Common myeloid progenitor, CD34-positive (primary cell): ENCODE measurements at regions of chr18 and their contacts with region 1.

Region 1: DNA sequence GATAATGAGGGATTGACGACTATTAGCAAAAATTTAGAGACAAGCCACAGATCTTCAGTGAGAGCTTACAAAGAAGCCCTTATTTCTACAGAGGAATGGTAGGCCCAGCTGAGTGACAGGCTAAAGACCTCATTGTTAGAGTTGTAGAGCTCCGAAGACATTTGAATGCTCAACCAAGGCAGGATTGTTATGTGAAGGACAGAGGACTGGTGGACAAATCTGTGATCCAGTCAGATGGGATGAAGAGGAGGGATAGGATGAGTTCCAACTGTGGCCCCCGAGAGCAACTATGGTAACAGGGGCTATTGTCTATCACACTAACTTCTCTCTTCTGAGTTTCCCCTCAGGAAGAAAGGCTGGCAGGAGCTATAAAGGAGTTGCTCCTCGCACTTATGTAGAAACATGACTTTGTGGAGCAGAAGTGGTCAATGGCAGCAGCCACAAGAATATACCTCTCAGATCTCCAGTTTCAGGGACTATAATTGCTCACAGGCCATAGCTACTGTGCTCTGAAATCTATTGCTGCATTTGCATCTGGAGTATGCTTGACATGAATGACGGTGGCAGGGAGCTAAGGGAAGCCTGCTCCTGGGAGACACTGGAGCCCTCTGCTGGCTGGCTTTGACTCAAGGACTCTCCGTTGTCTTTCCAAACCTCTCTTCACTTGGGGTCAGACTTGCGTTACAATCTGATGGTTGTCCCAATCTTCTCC is 50.3 kb upstream of the GREB1L start:
- DNase-seq: peak; percentile 25 to 53 (median 42)
- H3K4me3 ChIP-seq: no peak overlapping the region
- H3K27ac ChIP-seq: no peak overlapping the region
- H3K4me1 ChIP-seq: no peaks in the 10 kb centered on the region
- H3K27me3 ChIP-seq: peaks cover 0 to 10% (median 0%) of the 10 kb centered on the region in 5 experiments

Region 2: GRCh38 chr18:21179590-21180220 is 12.0 kb before region 1 on chr18:
- CTCF ChIA-PET with region 1: interaction called, 21 read pairs
- POLR2A ChIA-PET with region 1: no interaction called
- DNase-seq: peak; percentile 63 to 85 (median 75)
- H3K4me3 ChIP-seq: no peak overlapping the region
- H3K27ac ChIP-seq: no peak overlapping the region
- H3K4me1 ChIP-seq: peaks cover 0 to 6% (median 4%) of the 10 kb centered on the region in 4 experiments
- H3K27me3 ChIP-seq: no peaks in the 10 kb centered on the region

Region 3: DNA sequence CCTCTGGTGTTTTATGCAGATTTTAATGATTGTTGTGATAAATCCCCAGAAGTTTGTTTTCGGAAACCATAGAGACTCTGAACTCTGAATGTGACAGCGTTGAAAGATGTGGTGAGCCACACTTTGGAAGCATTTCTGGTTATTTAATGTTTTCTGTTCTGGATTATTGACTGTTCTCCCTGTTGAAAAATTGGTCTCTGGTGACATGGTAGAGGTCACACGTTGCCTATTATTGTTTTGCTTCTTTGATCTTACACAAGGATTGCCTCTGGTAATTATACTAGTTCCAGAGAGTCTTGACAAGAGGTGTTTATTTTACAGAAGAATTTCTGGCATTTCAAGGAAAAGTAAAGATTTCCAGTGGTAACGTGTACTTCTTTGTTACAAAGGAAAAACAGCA is 177.4 kb after region 1 on chr18:
- CTCF ChIA-PET with region 1: no interaction called
- POLR2A ChIA-PET with region 1: no interaction called
- DNase-seq: no peak
- H3K4me3 ChIP-seq: no peak overlapping the region
- H3K27ac ChIP-seq: no peak overlapping the region
- H3K4me1 ChIP-seq: no peaks in the 10 kb centered on the region
- H3K27me3 ChIP-seq: peaks cover 0 to 3% (median 0%) of the 10 kb centered on the region in 5 experiments

Region 4: DNA sequence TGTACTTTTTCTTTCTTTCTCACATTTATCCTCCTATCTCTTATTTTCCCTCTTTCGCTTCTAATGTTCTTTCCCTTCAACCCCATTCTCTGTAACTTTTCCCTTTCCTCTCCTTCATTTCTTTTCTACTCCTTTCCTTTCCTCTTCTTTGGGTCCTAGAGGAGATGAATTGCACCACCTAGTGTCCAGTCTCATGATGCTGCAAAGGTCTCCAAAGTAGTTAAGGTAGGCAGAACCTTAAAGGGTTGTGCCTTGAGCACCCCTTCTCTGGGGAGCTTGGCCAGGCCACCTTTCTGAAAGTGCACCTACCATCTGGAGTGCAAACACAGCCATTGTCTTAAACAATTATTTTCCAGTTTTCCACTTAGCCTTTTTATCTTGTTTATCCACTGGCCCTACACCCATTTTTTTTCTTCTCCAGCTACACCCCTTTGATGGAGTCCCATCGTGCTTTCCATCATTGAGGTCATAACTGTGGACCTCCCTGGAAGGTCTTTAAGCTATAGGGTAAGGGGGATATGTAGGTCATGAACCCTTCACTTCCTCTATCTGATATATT is 252.8 kb after region 1 on chr18:
- CTCF ChIA-PET with region 1: interaction called, 26 read pairs
- POLR2A ChIA-PET with region 1: no interaction called
- DNase-seq: peak; percentile 36 to 68 (median 60)
- H3K4me3 ChIP-seq: no peak overlapping the region
- H3K27ac ChIP-seq: no peak overlapping the region
- H3K4me1 ChIP-seq: no peaks in the 10 kb centered on the region
- H3K27me3 ChIP-seq: peaks cover 0 to 7% (median under 1%) of the 10 kb centered on the region in 5 experiments